CD4-positive, alpha-beta T cell (primary cell): ENCODE measurements at regions of chr15 and their contacts with region 1.

Region 1: GRCh38 chr15:60592371-60593169 is 113.6 kb upstream of the ICE2 start:
- DNase-seq: peak; percentile 75 to 94 (median 85)
- ATAC-seq: peak; percentile 81
- H3K4me3 ChIP-seq: peak overlapping the region; percentile 84
- H3K4me3 Mint-ChIP-seq: peak overlapping the region; percentile 82
- H3K27ac ChIP-seq: peak overlapping the region; percentile 58 to 90
- H3K27ac Mint-ChIP-seq: peak overlapping the region; percentile 85
- H3K4me1 ChIP-seq: peaks cover 12% of the 10 kb centered on the region
- H3K4me1 Mint-ChIP-seq: peaks cover 39% of the 10 kb centered on the region
- H3K27me3 ChIP-seq: no peaks in the 10 kb centered on the region
- H3K27me3 Mint-ChIP-seq: no peaks in the 10 kb centered on the region
- CTCF ChIP-seq: peak; percentile 12

Region 2: DNA sequence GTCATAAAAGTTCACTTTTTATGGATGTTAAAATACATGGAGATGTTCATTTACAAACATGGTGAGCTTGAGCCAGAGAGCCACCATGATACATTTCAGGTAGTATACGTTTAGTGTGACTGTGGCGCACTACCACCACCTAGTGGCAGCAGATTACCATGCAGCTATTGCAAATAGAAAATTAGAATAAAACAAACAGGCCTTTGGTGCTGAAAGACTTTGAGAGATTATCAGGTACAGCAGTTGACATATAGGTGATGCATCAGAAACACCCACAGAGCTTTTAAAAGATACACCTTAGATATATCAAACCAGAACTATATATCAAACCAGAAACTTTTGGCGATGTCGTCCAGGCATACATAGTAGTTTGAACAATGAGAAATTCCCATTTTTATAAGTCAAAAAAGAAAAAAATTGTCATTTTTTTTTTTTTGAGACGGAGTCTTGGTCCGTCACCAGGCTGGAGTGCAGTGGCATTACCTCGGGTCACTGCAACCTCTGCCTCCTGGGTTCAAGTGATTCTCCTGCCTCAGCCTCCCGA is 71.7 kb before region 1 on chr15:
- CTCF ChIA-PET with region 1: interaction called, 11 read pairs
- POLR2A ChIA-PET with region 1: interaction called, 21 read pairs
- intact Hi-C with region 1: no loop called
- DNase-seq: peak; percentile 68 to 89 (median 78)
- ATAC-seq: peak; percentile 88
- H3K4me3 ChIP-seq: no peak overlapping the region
- H3K4me3 Mint-ChIP-seq: no peak overlapping the region
- H3K27ac ChIP-seq: no peak overlapping the region
- H3K27ac Mint-ChIP-seq: peak overlapping the region; percentile 65
- H3K4me1 ChIP-seq: peaks cover 22% of the 10 kb centered on the region
- H3K4me1 Mint-ChIP-seq: peaks cover 66% of the 10 kb centered on the region
- H3K27me3 ChIP-seq: no peaks in the 10 kb centered on the region
- H3K27me3 Mint-ChIP-seq: no peaks in the 10 kb centered on the region
- CTCF ChIP-seq: peak; percentile 92

Region 3: DNA sequence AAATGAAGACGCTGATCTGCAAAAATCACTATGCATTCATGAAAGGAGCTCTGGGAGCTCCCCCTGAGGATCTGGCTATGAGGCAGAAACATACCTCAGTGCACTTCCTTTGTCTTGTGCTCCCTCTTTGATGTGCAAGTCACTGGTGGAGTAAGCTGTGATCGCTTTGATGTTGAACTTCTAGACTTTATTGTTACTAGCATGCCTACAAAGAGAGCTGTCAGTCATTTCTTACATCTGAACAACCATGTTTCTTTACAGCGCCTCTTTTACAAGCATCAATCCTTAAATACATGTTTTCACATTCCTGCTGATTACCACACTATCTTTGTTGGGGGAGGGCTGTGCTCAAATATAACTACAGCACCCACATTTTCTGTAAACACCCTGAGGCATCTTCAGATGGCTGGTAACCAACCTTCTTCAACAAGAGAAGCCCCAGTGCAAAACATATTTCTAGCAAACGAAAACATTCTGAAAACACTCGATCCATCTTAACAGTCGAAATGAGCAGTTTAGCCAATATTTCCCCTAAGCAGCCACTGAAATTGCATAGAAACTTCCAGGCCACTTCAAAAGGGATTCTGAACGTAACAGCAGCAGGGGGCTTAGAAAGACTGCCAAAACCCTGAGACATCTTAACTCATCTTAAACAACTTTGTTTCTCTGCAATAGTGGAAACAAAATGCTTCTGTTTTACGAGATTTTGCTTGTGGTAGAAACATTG is 11.8 kb before region 1 on chr15:
- CTCF ChIA-PET with region 1: interaction called, 4 read pairs
- POLR2A ChIA-PET with region 1: interaction called, 240 read pairs
- intact Hi-C with region 1: loop called in 1 of 2 experiments (anchors 1 kb)
- DNase-seq: peak in 9 of 14 experiments; percentile 32 to 92 (median 60)
- ATAC-seq: peak; percentile 83
- H3K4me3 ChIP-seq: peak overlapping the region; percentile 10
- H3K4me3 Mint-ChIP-seq: peak overlapping the region; percentile 56
- H3K27ac ChIP-seq: peak overlapping the region; percentile 62 to 76
- H3K27ac Mint-ChIP-seq: peak overlapping the region; percentile 85
- H3K4me1 ChIP-seq: peaks cover 61% of the 10 kb centered on the region
- H3K4me1 Mint-ChIP-seq: peaks cover 90% of the 10 kb centered on the region
- H3K27me3 ChIP-seq: no peaks in the 10 kb centered on the region
- H3K27me3 Mint-ChIP-seq: no peaks in the 10 kb centered on the region
- CTCF ChIP-seq: no peak

Region 4: GRCh38 chr15:60720493-60721256 is 128.1 kb after region 1 on chr15:
- CTCF ChIA-PET with region 1: interaction called, 3 read pairs
- POLR2A ChIA-PET with region 1: interaction called, 6 read pairs
- intact Hi-C with region 1: loop called (anchors 5 kb)
- DNase-seq: peak; percentile 13 to 72 (median 34)
- ATAC-seq: peak; percentile 78
- H3K4me3 ChIP-seq: peak overlapping the region; percentile 30
- H3K4me3 Mint-ChIP-seq: peak overlapping the region; percentile 78
- H3K27ac ChIP-seq: peak overlapping the region; percentile 44 to 72
- H3K27ac Mint-ChIP-seq: peak overlapping the region; percentile 86
- H3K4me1 ChIP-seq: peaks cover 48% of the 10 kb centered on the region
- H3K4me1 Mint-ChIP-seq: peaks cover 69% of the 10 kb centered on the region
- H3K27me3 ChIP-seq: no peaks in the 10 kb centered on the region
- H3K27me3 Mint-ChIP-seq: no peaks in the 10 kb centered on the region
- CTCF ChIP-seq: no peak

Region 5: GRCh38 chr15:60916679-60917460 is 324.3 kb after region 1 on chr15:
- CTCF ChIA-PET with region 1: interaction called, 13 read pairs
- POLR2A ChIA-PET with region 1: interaction called, 14 read pairs
- intact Hi-C with region 1: loop called in 1 of 2 experiments (anchors 1 kb)
- DNase-seq: peak; percentile 76 to 96 (median 84)
- ATAC-seq: peak; percentile 98
- H3K4me3 ChIP-seq: no peak overlapping the region
- H3K4me3 Mint-ChIP-seq: no peak overlapping the region
- H3K27ac ChIP-seq: no peak overlapping the region
- H3K27ac Mint-ChIP-seq: peak overlapping the region; percentile 50
- H3K4me1 ChIP-seq: peaks cover 12% of the 10 kb centered on the region
- H3K4me1 Mint-ChIP-seq: peaks cover 17% of the 10 kb centered on the region
- H3K27me3 ChIP-seq: no peaks in the 10 kb centered on the region
- H3K27me3 Mint-ChIP-seq: no peaks in the 10 kb centered on the region
- CTCF ChIP-seq: peak; percentile 84